H1 (cell line): ENCODE measurements at regions of chr11 and their contacts with region 1.

Region 1: GRCh38 chr11:125345421-125346178 is 150.5 kb downstream of the FEZ1 start:
- DNase-seq: peak in 1 of 2 experiments; percentile 87
- H3K4me3 ChIP-seq: no peak overlapping the region
- H3K27ac ChIP-seq: no peak overlapping the region
- H3K4me1 ChIP-seq: peaks cover 0 to 29% (median 13%) of the 10 kb centered on the region in 4 experiments; a peak in 6 of 7 replicates
- H3K27me3 ChIP-seq: peaks cover 0 to 10% (median 3%) of the 10 kb centered on the region in 4 experiments; a peak in 3 of 7 replicates
- CTCF ChIP-seq: peak; percentile 82 to 85 (median 83)
- EP300 ChIP-seq: no peak
- POLR2A ChIP-seq: no peak
- RAD21 ChIP-seq: peak; percentile 71 to 81

Region 2: GRCh38 chr11:124788521-124788920 is 557.1 kb before region 1 on chr11:
- CTCF ChIA-PET with region 1: no interaction called
- POLR2A ChIA-PET with region 1: no interaction called
- DNase-seq: no peak
- H3K4me3 ChIP-seq: no peak overlapping the region
- H3K27ac ChIP-seq: no peak overlapping the region
- H3K4me1 ChIP-seq: peaks cover 3 to 20% (median 7%) of the 10 kb centered on the region in 4 experiments; a peak in 6 of 7 replicates
- H3K27me3 ChIP-seq: no peaks in the 10 kb centered on the region
- CTCF ChIP-seq: no peak
- EP300 ChIP-seq: no peak
- POLR2A ChIP-seq: no peak
- RAD21 ChIP-seq: no peak

Region 3: DNA sequence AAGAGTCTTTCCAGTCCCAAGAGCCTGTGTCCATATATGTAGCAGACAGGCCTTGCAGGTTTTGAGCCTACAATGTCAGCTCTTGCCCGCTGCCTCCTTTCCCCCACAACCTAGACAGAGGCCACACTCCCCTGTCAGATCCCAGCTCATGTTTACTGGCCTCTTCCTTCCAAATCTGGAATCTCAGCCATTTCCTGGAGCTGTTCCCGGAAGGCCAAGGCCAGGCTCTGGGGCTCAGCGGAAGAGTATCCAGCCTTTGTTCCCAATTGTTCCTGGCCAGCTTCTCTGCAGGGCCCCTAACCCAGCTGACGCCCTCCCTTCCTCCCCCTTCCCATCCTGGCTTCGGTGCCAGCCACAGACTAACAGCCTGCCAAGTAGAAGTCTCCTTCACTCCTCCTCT is 446.9 kb before region 1 on chr11:
- CTCF ChIA-PET with region 1: no interaction called
- POLR2A ChIA-PET with region 1: no interaction called
- DNase-seq: peak in 1 of 2 experiments; percentile 47
- H3K4me3 ChIP-seq: no peak overlapping the region
- H3K27ac ChIP-seq: no peak overlapping the region
- H3K4me1 ChIP-seq: peaks cover 0 to 2% (median 1%) of the 10 kb centered on the region in 4 experiments; a peak in 3 of 7 replicates
- H3K27me3 ChIP-seq: peaks cover 0 to 6% (median 0%) of the 10 kb centered on the region in 4 experiments; a peak in 3 of 7 replicates
- CTCF ChIP-seq: no peak
- EP300 ChIP-seq: no peak
- POLR2A ChIP-seq: no peak
- RAD21 ChIP-seq: no peak

Region 4: DNA sequence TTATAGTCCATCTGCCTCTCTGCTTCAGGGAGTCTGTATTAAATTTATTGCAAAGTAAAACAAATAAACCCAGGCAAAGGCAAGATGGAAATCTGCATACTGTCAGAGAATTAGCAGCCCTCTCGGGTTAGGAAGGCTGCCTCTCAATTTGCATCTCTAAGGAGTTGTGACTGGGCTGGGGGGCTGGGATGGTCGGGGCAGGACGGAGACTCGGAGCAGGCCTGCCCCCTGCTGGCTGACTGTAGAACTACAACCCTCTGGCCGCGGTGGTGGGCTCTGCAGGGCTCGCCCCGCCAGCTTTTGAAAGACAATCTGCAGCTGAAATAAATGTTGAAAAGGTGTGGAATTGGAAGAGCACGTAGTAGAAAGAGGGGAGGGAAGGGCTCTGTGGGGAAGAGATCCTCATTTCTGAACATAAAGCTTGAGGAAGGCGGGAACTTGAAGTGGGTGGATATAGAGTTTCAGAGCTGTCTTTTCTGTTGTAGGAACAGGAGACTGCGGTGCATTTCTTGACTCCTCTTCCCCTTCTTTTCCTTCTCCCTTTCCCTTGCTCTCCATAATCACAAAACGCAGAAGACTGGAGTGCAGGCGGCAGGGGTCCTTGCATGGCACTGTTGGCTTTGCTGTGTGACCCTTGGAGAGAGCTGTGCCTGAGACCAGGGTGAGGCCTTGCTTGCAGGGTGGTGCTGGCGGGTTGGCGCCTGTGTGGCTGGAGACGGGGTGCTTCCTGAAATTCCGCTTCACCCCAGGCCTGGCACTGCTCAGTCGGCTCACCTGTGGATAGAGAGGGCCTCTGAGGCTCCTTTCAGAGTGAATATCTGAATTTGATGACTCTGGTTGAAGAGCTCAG is 203.7 kb before region 1 on chr11:
- CTCF ChIA-PET with region 1: interaction called, 70 read pairs
- POLR2A ChIA-PET with region 1: no interaction called
- DNase-seq: peak in 1 of 2 experiments; percentile 97
- H3K4me3 ChIP-seq: peak overlapping the region in 1 of 4 experiments; percentile 47; a peak in 2 of 8 replicates
- H3K27ac ChIP-seq: no peak overlapping the region
- H3K4me1 ChIP-seq: peaks cover 10 to 32% (median 25%) of the 10 kb centered on the region in 4 experiments
- H3K27me3 ChIP-seq: peaks cover 5 to 46% (median 35%) of the 10 kb centered on the region in 4 experiments
- CTCF ChIP-seq: peak; percentile 87 to 95 (median 89)
- EP300 ChIP-seq: no peak
- POLR2A ChIP-seq: no peak
- RAD21 ChIP-seq: peak; percentile 83 to 88

Region 5: GRCh38 chr11:125214571-125215565 is 130.7 kb before region 1 on chr11:
- CTCF ChIA-PET with region 1: interaction called, 27 read pairs
- POLR2A ChIA-PET with region 1: no interaction called
- DNase-seq: no peak
- H3K4me3 ChIP-seq: no peak overlapping the region
- H3K27ac ChIP-seq: no peak overlapping the region; the same call in 1 of the 2 replicates
- H3K4me1 ChIP-seq: peaks cover 8 to 24% (median 14%) of the 10 kb centered on the region in 4 experiments
- H3K27me3 ChIP-seq: no peaks in the 10 kb centered on the region; a peak in 2 of 7 replicates
- CTCF ChIP-seq: no peak
- EP300 ChIP-seq: no peak
- POLR2A ChIP-seq: no peak
- RAD21 ChIP-seq: no peak

Region 6: GRCh38 chr11:125263268-125263790 is 82.3 kb before region 1 on chr11:
- CTCF ChIA-PET with region 1: interaction called, 81 read pairs
- POLR2A ChIA-PET with region 1: interaction called, 3 read pairs
- DNase-seq: peak; percentile 87 to 94
- H3K4me3 ChIP-seq: peak overlapping the region in 3 of 4 experiments; percentile 14 to 47 (median 23); a peak in 5 of 8 replicates
- H3K27ac ChIP-seq: 0 out of 2 replicates have a peak overlapping the region, but pooled peaks have one; percentile 30
- H3K4me1 ChIP-seq: peaks cover 11 to 30% (median 23%) of the 10 kb centered on the region in 4 experiments
- H3K27me3 ChIP-seq: peaks cover 0 to 19% (median 14%) of the 10 kb centered on the region in 4 experiments; a peak in 5 of 7 replicates
- CTCF ChIP-seq: no peak
- EP300 ChIP-seq: peak; percentile 54 to 95; a peak in 2 of 3 replicates
- POLR2A ChIP-seq: no peak
- RAD21 ChIP-seq: peak in 1 of 2 experiments; percentile 15; a peak in 2 of 4 replicates

Region 7: DNA sequence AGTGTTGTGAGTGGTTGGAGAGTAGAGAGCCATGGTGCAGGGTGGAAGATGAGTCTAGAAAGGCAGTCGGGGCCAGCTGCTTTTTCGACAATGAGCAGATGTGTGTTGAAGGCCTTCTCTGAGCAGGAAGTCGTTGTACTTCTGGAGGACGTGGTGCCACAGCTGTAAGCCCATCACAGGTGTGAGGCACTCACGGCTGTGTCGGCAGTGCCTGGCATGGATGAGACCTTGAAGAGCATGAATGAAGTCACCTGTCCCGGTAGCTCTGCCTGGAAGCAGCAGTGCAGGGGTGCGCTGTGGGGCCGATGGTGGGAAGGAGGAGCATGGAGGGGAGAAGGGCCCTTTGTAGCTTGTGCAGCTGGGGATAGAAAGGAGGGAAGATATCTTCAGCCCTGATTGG is 15.8 kb before region 1 on chr11:
- CTCF ChIA-PET with region 1: interaction called, 198 read pairs
- POLR2A ChIA-PET with region 1: no interaction called
- DNase-seq: no peak
- H3K4me3 ChIP-seq: no peak overlapping the region
- H3K27ac ChIP-seq: no peak overlapping the region
- H3K4me1 ChIP-seq: no peaks in the 10 kb centered on the region; a peak in 1 of 7 replicates
- H3K27me3 ChIP-seq: no peaks in the 10 kb centered on the region
- CTCF ChIP-seq: no peak
- EP300 ChIP-seq: no peak
- POLR2A ChIP-seq: no peak
- RAD21 ChIP-seq: no peak

Region 8: GRCh38 chr11:125410091-125410490 is 64.5 kb after region 1 on chr11:
- CTCF ChIA-PET with region 1: interaction called, 223 read pairs
- POLR2A ChIA-PET with region 1: no interaction called
- DNase-seq: peak in 1 of 2 experiments; percentile 60
- H3K4me3 ChIP-seq: no peak overlapping the region
- H3K27ac ChIP-seq: no peak overlapping the region
- H3K4me1 ChIP-seq: peaks cover 0 to 8% (median 4%) of the 10 kb centered on the region in 4 experiments; a peak in 3 of 7 replicates
- H3K27me3 ChIP-seq: 0 out of 7 replicates have a peak, but pooled peaks cover 0 to 4% (median under 1%) of the 10 kb centered on the region in 4 experiments
- CTCF ChIP-seq: no peak
- EP300 ChIP-seq: no peak
- POLR2A ChIP-seq: no peak
- RAD21 ChIP-seq: no peak